ENCODE measurements at regions of chr3 and their contacts with region 1.

Region 1: DNA sequence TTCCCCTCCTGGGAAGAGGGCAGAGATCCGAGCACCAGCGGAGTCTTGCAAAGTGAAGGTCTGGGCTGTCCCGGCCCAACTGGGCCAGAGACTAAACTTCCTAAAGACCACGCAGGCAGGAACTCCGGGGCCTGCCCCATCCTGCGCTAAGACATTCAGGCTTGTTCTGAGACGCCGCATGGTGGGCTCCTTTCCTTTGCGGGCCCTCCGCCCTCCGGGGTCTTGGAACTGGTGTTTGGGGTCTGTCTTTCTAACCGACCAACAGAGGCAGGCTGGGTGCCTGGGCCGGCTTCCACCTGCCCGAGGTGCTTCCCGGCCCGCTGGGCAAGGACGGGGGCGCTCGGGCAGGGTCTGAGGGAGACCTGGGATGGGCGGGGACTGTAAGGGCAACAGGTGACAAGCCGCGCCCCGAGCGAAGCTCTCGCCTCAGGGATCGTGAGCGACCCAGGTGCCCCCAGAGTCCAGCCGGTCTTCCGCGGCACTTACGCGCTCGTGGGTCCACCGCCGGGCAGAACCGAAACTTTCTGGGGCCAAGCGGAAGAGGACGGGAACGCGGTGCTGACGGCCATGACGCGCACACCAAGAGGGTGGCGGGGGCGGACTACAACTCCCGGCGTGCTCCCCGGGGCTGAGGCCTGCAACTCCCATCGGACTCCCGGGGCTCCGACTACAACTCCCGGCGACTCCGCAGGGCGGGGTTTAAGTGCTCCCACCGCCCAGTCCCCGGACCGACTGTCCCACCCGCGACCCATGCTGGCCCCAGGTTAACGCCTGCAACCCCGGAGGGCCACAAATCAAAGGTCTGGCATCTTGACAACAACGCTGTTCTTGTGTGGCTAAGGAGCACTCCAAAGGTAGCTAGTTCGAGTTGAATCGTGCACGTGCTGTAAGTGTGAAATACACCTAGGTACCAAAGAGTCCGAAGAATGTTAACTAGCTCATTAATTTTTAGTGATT is at the start of gene FYCO1:
- DNase-seq: peak; percentile 75 to 87 (median 86)
- ATAC-seq: peak; percentile 96
- H3K4me3 ChIP-seq: peak within 1 kb of the TSS; percentile 85
- H3K4me3 Mint-ChIP-seq: peak within 1 kb of the TSS; percentile 83 to 93 (median 90)
- H3K27ac ChIP-seq: peak within 1 kb of the TSS; percentile 84
- H3K27ac Mint-ChIP-seq: peak within 1 kb of the TSS; percentile 78 to 96 (median 92)
- H3K4me1 ChIP-seq: peaks cover 22 to 48% of the 10 kb centered on the region in 2 donors
- H3K4me1 Mint-ChIP-seq: peaks cover 10 to 49% (median 37%) of the 10 kb centered on the region in 7 donors
- H3K27me3 ChIP-seq: no peaks in the 10 kb centered on the region
- H3K27me3 Mint-ChIP-seq: peaks cover 3 to 11% (median 8%) of the 10 kb centered on the region in 5 donors
- total RNA-seq, gene FYCO1: 20.0 to 27.5 (median 22.9) TPM

Region 2: GRCh38 chr3:45841757-45842491 is 153.6 kb before region 1 on chr3 and contains the start of gene LZTFL1:
- CTCF ChIA-PET with region 1: no interaction called
- POLR2A ChIA-PET with region 1: no interaction called
- intact Hi-C with region 1: loop called (anchors 10 kb)
- DNase-seq: peak; percentile 62 to 94 (median 91)
- ATAC-seq: peak; percentile 94
- H3K4me3 ChIP-seq: peak within 1 kb of the TSS; percentile 77
- H3K4me3 Mint-ChIP-seq: peak within 1 kb of the TSS; percentile 90 to 97 (median 94)
- H3K27ac ChIP-seq: peak within 1 kb of the TSS; percentile 88
- H3K27ac Mint-ChIP-seq: peak within 1 kb of the TSS; percentile 86 to 98 (median 94)
- H3K4me1 ChIP-seq: peaks cover 8 to 13% of the 10 kb centered on the region in 2 donors
- H3K4me1 Mint-ChIP-seq: peaks cover 6 to 41% (median 25%) of the 10 kb centered on the region in 7 donors
- H3K27me3 ChIP-seq: no peaks in the 10 kb centered on the region
- H3K27me3 Mint-ChIP-seq: peaks cover 0 to 65% (median 0%) of the 10 kb centered on the region in 5 donors
- total RNA-seq, gene LZTFL1: 8.5 to 15.7 (median 12.6) TPM

Region 3: GRCh38 chr3:45950686-45951600 is 44.6 kb before region 1 on chr3:
- CTCF ChIA-PET with region 1: no interaction called
- POLR2A ChIA-PET with region 1: interaction called, 3 read pairs
- intact Hi-C with region 1: loop called in 1 of 2 experiments (anchors 2 kb)
- DNase-seq: peak in 5 of 9 donors; percentile 12 to 59 (median 38)
- ATAC-seq: peak; percentile 80
- H3K4me3 ChIP-seq: no peak overlapping the region
- H3K4me3 Mint-ChIP-seq: peak overlapping the region in 5 of 10 donors; percentile 3 to 63 (median 35)
- H3K27ac ChIP-seq: no peak overlapping the region
- H3K27ac Mint-ChIP-seq: peak overlapping the region in 8 of 9 donors; percentile 9 to 89 (median 63)
- H3K4me1 ChIP-seq: peaks cover 9 to 70% of the 10 kb centered on the region in 2 donors
- H3K4me1 Mint-ChIP-seq: peaks cover 11 to 76% (median 25%) of the 10 kb centered on the region in 7 donors
- H3K27me3 ChIP-seq: no peaks in the 10 kb centered on the region
- H3K27me3 Mint-ChIP-seq: no peaks in the 10 kb centered on the region

Region 4: GRCh38 chr3:45978006-45978761 is 17.3 kb before region 1 on chr3:
- CTCF ChIA-PET with region 1: no interaction called
- POLR2A ChIA-PET with region 1: interaction called, 14 read pairs
- intact Hi-C with region 1: loop called (anchors 1 kb)
- DNase-seq: peak in 7 of 9 donors; percentile 23 to 57 (median 37)
- ATAC-seq: no peak
- H3K4me3 ChIP-seq: no peak overlapping the region
- H3K4me3 Mint-ChIP-seq: peak overlapping the region; percentile 43 to 87 (median 70)
- H3K27ac ChIP-seq: peak overlapping the region; percentile 32
- H3K27ac Mint-ChIP-seq: peak overlapping the region; percentile 68 to 94 (median 85)
- H3K4me1 ChIP-seq: peaks cover 36 to 92% of the 10 kb centered on the region in 2 donors
- H3K4me1 Mint-ChIP-seq: peaks cover 30 to 86% (median 53%) of the 10 kb centered on the region in 7 donors
- H3K27me3 ChIP-seq: no peaks in the 10 kb centered on the region
- H3K27me3 Mint-ChIP-seq: no peaks in the 10 kb centered on the region

Region 5: GRCh38 chr3:46070595-46071093 is 75.1 kb after region 1 on chr3:
- CTCF ChIA-PET with region 1: interaction called, 14 read pairs
- POLR2A ChIA-PET with region 1: interaction called, 3 read pairs
- intact Hi-C with region 1: loop called (anchors 1 kb)
- DNase-seq: peak in 7 of 9 donors; percentile 32 to 72 (median 52)
- ATAC-seq: peak; percentile 65
- H3K4me3 ChIP-seq: no peak overlapping the region
- H3K4me3 Mint-ChIP-seq: peak overlapping the region in 9 of 10 donors; percentile 3 to 57 (median 35)
- H3K27ac ChIP-seq: no peak overlapping the region
- H3K27ac Mint-ChIP-seq: peak overlapping the region in 8 of 9 donors; percentile 0 to 75 (median 32)
- H3K4me1 ChIP-seq: peaks cover 39 to 62% of the 10 kb centered on the region in 2 donors
- H3K4me1 Mint-ChIP-seq: peaks cover 45 to 66% (median 61%) of the 10 kb centered on the region in 7 donors
- H3K27me3 ChIP-seq: no peaks in the 10 kb centered on the region
- H3K27me3 Mint-ChIP-seq: peaks cover 0 to 60% (median 0%) of the 10 kb centered on the region in 5 donors

Measured in naive thymus-derived CD4-positive, alpha-beta T cell (primary cell).